H1 (cell line): ENCODE measurements at regions of chr3 and their contacts with region 1.

Region 1: GRCh38 chr3:120417272-120417911 is 33.4 kb downstream of the FSTL1 start:
- DNase-seq: peak; percentile 87 to 93
- H3K4me3 ChIP-seq: peak overlapping the region in 2 of 4 experiments; percentile 8 to 22; a peak in 3 of 8 replicates
- H3K27ac ChIP-seq: peak overlapping the region; percentile 62
- H3K4me1 ChIP-seq: peaks cover 0 to 13% (median 9%) of the 10 kb centered on the region in 4 experiments; a peak in 6 of 7 replicates
- H3K27me3 ChIP-seq: no peaks in the 10 kb centered on the region
- CTCF ChIP-seq: peak; percentile 65 to 87 (median 75)
- EP300 ChIP-seq: no peak
- POLR2A ChIP-seq: no peak
- RAD21 ChIP-seq: peak; percentile 64 to 73; a peak in 3 of 4 replicates

Region 2: DNA sequence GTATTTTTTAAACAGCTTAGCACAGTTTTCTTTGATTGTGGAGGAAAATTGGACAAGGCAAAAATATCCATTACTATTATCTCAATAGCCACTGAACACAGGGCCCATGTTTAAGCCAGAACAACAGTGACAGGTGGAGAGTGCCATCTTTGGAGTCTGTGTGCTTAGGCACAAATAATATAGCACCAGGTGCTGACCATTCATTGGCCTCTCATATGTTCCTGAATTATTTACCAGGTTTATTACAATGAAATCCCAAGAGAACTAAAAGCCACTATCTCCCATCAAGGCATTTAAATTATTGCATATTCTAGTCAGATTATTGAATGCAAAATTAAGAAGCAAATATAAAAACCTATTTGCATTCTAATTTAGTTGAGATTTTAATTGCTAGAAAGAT is 172.0 kb before region 1 on chr3:
- CTCF ChIA-PET with region 1: interaction called, 35 read pairs
- POLR2A ChIA-PET with region 1: no interaction called
- DNase-seq: no peak
- H3K4me3 ChIP-seq: no peak overlapping the region
- H3K27ac ChIP-seq: no peak overlapping the region
- H3K4me1 ChIP-seq: no peaks in the 10 kb centered on the region
- H3K27me3 ChIP-seq: no peaks in the 10 kb centered on the region; a peak in 1 of 7 replicates
- CTCF ChIP-seq: no peak
- EP300 ChIP-seq: no peak
- POLR2A ChIP-seq: no peak
- RAD21 ChIP-seq: no peak

Region 3: GRCh38 chr3:120435621-120436020 is 18.2 kb after region 1 on chr3:
- CTCF ChIA-PET with region 1: interaction called, 294 read pairs
- POLR2A ChIA-PET with region 1: interaction called, 299 read pairs
- DNase-seq: no peak
- H3K4me3 ChIP-seq: no peak overlapping the region
- H3K27ac ChIP-seq: no peak overlapping the region
- H3K4me1 ChIP-seq: peaks cover 3 to 24% (median 16%) of the 10 kb centered on the region in 4 experiments
- H3K27me3 ChIP-seq: no peaks in the 10 kb centered on the region
- CTCF ChIP-seq: no peak
- EP300 ChIP-seq: no peak
- POLR2A ChIP-seq: no peak
- RAD21 ChIP-seq: no peak

Region 4: GRCh38 chr3:120460862-120461261 is 43.5 kb after region 1 on chr3:
- CTCF ChIA-PET with region 1: interaction called, 36 read pairs
- POLR2A ChIA-PET with region 1: no interaction called
- DNase-seq: no peak
- H3K4me3 ChIP-seq: no peak overlapping the region
- H3K27ac ChIP-seq: no peak overlapping the region
- H3K4me1 ChIP-seq: peaks cover 0 to 11% (median 2%) of the 10 kb centered on the region in 4 experiments; a peak in 2 of 7 replicates
- H3K27me3 ChIP-seq: 0 out of 7 replicates have a peak, but pooled peaks cover 0 to 3% (median 0%) of the 10 kb centered on the region in 4 experiments
- CTCF ChIP-seq: no peak
- EP300 ChIP-seq: no peak
- POLR2A ChIP-seq: no peak
- RAD21 ChIP-seq: no peak

Region 5: DNA sequence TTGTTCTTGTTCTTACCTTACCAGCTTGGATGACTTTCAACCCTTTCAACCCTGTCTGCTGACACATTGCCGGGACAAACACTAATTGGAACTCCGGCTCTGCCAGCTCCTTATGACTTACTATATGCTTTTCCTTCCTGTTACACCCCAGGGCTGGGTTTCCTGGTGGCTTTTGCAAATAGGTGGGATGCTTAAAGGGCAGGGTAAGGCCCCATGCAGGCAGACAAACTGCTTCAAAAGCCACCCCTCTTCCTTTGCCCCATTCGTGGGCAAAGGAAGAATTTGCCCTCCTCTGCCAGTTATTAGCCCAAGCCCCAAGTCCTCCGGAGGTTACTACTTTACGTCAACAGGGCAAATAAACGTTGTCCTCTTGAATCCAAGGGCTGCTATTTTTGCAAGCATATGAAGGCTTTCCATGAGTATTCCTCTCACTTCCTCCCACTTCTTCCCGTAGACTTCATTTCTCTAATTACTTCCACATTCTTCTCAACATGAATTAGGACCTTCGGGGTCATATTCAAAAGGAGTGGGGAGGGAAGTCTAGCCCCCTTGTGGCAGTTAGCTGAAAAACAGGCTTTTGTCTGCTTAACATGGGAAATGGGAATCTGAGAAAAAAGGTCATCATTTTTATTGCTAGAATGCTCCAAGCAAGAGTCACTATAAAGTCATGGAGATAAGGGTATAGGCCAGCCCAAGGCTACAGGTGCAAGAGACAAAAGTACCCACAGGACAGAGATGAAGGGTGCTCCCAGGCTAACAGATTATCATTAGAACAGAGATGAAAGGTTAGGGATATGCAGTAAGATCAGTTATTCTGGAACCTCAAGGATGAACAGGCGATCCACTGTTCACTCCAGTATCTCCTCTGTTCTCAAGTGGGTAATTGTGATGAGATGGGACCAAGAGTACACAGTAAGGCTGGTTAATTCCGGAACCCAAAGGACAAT is 89.7 kb after region 1 on chr3:
- CTCF ChIA-PET with region 1: interaction called, 35 read pairs
- POLR2A ChIA-PET with region 1: interaction called, 4 read pairs
- DNase-seq: peak in 1 of 2 experiments; percentile 59
- H3K4me3 ChIP-seq: no peak overlapping the region
- H3K27ac ChIP-seq: no peak overlapping the region
- H3K4me1 ChIP-seq: peaks cover 4 to 17% (median 9%) of the 10 kb centered on the region in 4 experiments
- H3K27me3 ChIP-seq: no peaks in the 10 kb centered on the region
- CTCF ChIP-seq: peak in 2 of 3 experiments; percentile 48 to 63; a peak in 3 of 4 replicates
- EP300 ChIP-seq: no peak
- POLR2A ChIP-seq: no peak
- RAD21 ChIP-seq: peak; percentile 57 to 64

Region 6: GRCh38 chr3:120550546-120550945 is 133.2 kb after region 1 on chr3:
- CTCF ChIA-PET with region 1: interaction called, 130 read pairs
- POLR2A ChIA-PET with region 1: interaction called, 29 read pairs
- DNase-seq: no peak
- H3K4me3 ChIP-seq: no peak overlapping the region
- H3K27ac ChIP-seq: no peak overlapping the region
- H3K4me1 ChIP-seq: no peaks in the 10 kb centered on the region
- H3K27me3 ChIP-seq: no peaks in the 10 kb centered on the region
- CTCF ChIP-seq: no peak
- EP300 ChIP-seq: no peak
- POLR2A ChIP-seq: no peak
- RAD21 ChIP-seq: no peak

Region 7: DNA sequence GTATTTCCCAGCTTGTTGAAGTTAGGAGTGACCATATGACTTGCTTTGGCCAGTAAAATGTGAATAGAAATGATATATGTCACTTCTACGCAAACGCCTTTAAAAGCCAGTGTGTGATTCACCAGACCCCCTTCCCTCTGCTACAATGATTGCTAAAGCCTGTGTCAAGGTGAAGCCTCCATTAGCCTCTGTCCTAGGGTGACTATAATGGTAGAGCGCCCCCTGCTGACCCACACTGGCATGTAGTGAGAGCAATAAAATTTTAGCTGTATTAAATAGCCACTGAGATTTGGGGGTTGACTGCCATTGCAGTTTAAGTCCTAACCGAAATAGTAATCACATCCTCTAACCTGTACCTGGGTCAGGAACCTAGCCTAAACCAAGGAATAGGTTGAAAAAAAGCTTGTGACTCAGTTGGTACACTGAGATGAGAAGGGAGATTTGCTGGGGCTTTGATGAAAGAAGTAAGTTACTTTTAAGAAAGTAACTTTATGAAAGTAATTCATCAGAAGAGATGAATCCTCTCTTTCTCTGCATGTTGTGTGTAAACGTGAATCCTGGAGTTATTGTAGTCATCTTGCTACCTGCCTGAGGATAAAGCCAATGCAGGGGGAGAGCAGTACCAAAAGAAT is 377.7 kb after region 1 on chr3:
- CTCF ChIA-PET with region 1: interaction called, 17 read pairs
- POLR2A ChIA-PET with region 1: no interaction called
- DNase-seq: peak; percentile 70 to 95
- H3K4me3 ChIP-seq: no peak overlapping the region
- H3K27ac ChIP-seq: no peak overlapping the region
- H3K4me1 ChIP-seq: peaks cover 0 to 6% (median 2%) of the 10 kb centered on the region in 4 experiments; a peak in 2 of 7 replicates
- H3K27me3 ChIP-seq: no peaks in the 10 kb centered on the region
- CTCF ChIP-seq: peak; percentile 44 to 87 (median 84)
- EP300 ChIP-seq: no peak
- POLR2A ChIP-seq: no peak
- RAD21 ChIP-seq: peak; percentile 88 to 96